A549 (cell line): ENCODE measurements at regions of chr9 and their contacts with region 1.

Region 1: GRCh38 chr9:78296893-78297671 is at the start of gene PSAT1:
- DNase-seq: peak; percentile 97 to 99
- ATAC-seq: peak; percentile 95 to 99
- H3K4me3 ChIP-seq: peak within 1 kb of the TSS; percentile 75
- H3K27ac ChIP-seq: peak within 1 kb of the TSS; percentile 97 to 99
- H3K4me1 ChIP-seq: peaks cover 44% of the 10 kb centered on the region
- CTCF ChIP-seq: no peak
- EP300 ChIP-seq: 0 out of 5 replicates have a peak, but pooled peaks of 1 of the 2 experiments have one; percentile 13
- POLR2A ChIP-seq: peak; percentile 50
- RAD21 ChIP-seq: no peak
- polyA plus RNA-seq, gene PSAT1: 383 and 529 TPM in 2 replicates

Region 2: GRCh38 chr9:78278177-78278777 is 18.8 kb before region 1 on chr9:
- CTCF ChIA-PET with region 1: no interaction called
- POLR2A ChIA-PET with region 1: interaction called, 12 read pairs
- DNase-seq: no peak
- ATAC-seq: no peak
- H3K4me3 ChIP-seq: no peak overlapping the region
- H3K27ac ChIP-seq: no peak overlapping the region
- H3K4me1 ChIP-seq: no peaks in the 10 kb centered on the region
- CTCF ChIP-seq: no peak
- EP300 ChIP-seq: no peak
- POLR2A ChIP-seq: no peak
- RAD21 ChIP-seq: no peak

Region 3: DNA sequence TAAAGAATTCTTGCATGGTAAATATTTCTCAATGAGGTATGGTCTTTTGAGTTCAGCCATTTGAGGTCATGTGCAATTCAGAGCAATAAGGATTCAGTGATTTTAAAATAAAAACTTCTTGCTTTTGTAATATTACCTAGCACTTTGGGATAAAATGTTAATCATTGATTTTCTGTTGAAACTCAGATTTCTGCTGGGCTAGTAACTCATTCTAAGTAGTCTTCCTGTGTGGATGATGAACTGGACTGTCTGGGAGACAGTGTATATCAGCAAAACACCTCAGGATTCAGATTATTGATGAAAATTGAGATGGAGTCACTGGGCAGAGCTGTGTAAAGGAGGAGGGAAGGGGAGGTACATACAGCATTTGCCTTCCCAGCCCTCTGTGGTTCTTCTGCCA is 11.0 kb before region 1 on chr9:
- CTCF ChIA-PET with region 1: no interaction called
- POLR2A ChIA-PET with region 1: interaction called, 12 read pairs
- DNase-seq: no peak
- ATAC-seq: no peak
- H3K4me3 ChIP-seq: no peak overlapping the region
- H3K27ac ChIP-seq: no peak overlapping the region
- H3K4me1 ChIP-seq: no peaks in the 10 kb centered on the region
- CTCF ChIP-seq: no peak
- EP300 ChIP-seq: no peak
- POLR2A ChIP-seq: no peak
- RAD21 ChIP-seq: no peak

Region 4: DNA sequence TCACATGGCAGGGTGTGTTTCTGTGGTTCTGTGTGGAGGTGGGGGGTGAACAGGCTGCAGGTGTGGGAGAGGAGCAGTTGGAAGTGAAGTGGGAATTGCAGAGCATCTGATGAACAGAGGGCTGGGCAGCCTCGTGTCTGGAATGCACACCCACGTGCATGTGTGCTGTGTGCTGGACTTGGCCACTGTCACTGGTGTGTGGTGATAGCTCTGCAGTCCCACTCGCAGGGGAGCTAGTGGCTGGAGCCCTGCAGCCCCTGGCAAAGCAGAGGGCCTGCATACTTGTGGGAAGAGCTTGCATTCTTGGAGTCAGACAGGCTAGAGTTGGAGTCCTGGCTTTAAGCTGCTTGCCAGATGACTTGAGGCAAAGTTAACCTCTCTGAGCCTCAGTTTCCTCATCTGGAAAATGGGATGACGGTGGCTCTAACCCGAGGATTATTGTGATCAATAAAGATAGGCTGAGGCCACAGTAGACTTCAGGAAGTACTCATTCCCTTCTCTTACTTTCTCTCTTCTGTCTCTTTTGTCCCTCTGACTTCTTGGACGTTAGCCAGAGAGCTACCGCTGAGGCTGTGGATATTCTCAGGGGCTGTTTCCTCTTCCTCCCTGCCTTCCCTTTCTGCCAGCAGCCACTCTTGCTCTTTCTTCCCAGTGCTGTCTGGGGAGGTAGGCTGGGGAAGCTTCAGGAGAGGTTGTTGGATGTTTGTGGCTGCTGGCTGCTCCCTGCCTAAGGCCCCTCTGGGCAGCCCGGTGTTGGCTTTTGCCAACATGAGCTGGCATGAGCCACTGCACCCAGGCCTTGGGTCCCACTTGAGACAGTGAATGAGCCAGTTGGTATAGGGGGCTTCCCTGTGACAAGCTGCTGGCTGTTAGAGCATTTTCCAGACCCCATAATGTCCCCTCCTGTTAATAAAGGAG is 18.1 kb after region 1 on chr9:
- CTCF ChIA-PET with region 1: no interaction called
- POLR2A ChIA-PET with region 1: interaction called, 12 read pairs
- DNase-seq: no peak
- ATAC-seq: no peak
- H3K4me3 ChIP-seq: no peak overlapping the region
- H3K27ac ChIP-seq: no peak overlapping the region
- H3K4me1 ChIP-seq: peaks cover 7% of the 10 kb centered on the region; the same call in 1 of the 3 replicates
- CTCF ChIP-seq: no peak
- EP300 ChIP-seq: no peak
- POLR2A ChIP-seq: no peak
- RAD21 ChIP-seq: no peak

Region 5: GRCh38 chr9:78428640-78429039 is 131.6 kb after region 1 on chr9:
- CTCF ChIA-PET with region 1: no interaction called
- POLR2A ChIA-PET with region 1: no interaction called
- DNase-seq: no peak
- ATAC-seq: no peak
- H3K4me3 ChIP-seq: no peak overlapping the region
- H3K27ac ChIP-seq: no peak overlapping the region
- H3K4me1 ChIP-seq: no peaks in the 10 kb centered on the region
- CTCF ChIP-seq: no peak
- EP300 ChIP-seq: no peak
- POLR2A ChIP-seq: no peak
- RAD21 ChIP-seq: no peak

Region 6: DNA sequence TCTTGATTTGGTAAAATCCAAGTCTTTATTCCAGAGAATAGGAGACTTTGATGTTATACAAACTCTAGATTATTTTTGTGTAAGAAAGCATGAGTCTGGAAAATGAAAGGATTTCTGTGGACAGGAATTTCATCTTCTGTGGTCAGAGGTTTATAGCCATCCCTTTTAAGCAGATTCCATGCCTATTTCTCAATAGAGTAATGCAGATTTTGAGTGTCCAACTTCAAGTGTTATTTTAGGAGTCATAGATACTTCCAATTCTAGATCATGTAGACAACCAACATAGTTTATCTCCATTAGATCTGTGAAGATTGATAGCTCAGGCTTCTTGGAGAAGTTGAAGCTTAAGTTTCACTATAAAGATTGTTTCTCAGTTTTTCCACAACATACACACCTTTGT is 379.5 kb after region 1 on chr9:
- CTCF ChIA-PET with region 1: no interaction called
- POLR2A ChIA-PET with region 1: no interaction called
- DNase-seq: no peak
- ATAC-seq: no peak
- H3K4me3 ChIP-seq: no peak overlapping the region
- H3K27ac ChIP-seq: no peak overlapping the region
- H3K4me1 ChIP-seq: peaks cover 6% of the 10 kb centered on the region; the same call in 1 of the 3 replicates
- CTCF ChIP-seq: no peak
- EP300 ChIP-seq: no peak
- POLR2A ChIP-seq: no peak
- RAD21 ChIP-seq: no peak